ENCODE measurements at regions of chr6 and their contacts with region 1.

Region 1: GRCh38 chr6:13454286-13455221 is 32.8 kb downstream of the GFOD1 start:
- DNase-seq: peak; percentile 70
- ATAC-seq: peak; percentile 81
- H3K4me3 Mint-ChIP-seq: peak overlapping the region; percentile 63
- H3K27ac Mint-ChIP-seq: peak overlapping the region; percentile 96
- H3K4me1 Mint-ChIP-seq: peaks cover 61% of the 10 kb centered on the region
- H3K27me3 Mint-ChIP-seq: no peaks in the 10 kb centered on the region

Region 2: GRCh38 chr6:13441778-13442177 is 12.8 kb before region 1 on chr6:
- CTCF ChIA-PET with region 1: interaction called, 16 read pairs
- POLR2A ChIA-PET with region 1: interaction called, 3 read pairs
- DNase-seq: no peak
- ATAC-seq: no peak
- H3K4me3 Mint-ChIP-seq: no peak overlapping the region
- H3K27ac Mint-ChIP-seq: no peak overlapping the region
- H3K4me1 Mint-ChIP-seq: peaks cover 26% of the 10 kb centered on the region
- H3K27me3 Mint-ChIP-seq: no peaks in the 10 kb centered on the region

Region 3: GRCh38 chr6:13487122-13488014 is 32.8 kb after region 1 on chr6 and contains the start of gene GFOD1:
- CTCF ChIA-PET with region 1: interaction called, 22 read pairs
- POLR2A ChIA-PET with region 1: interaction called, 4 read pairs
- DNase-seq: peak; percentile 82
- ATAC-seq: peak; percentile 87
- H3K4me3 Mint-ChIP-seq: peak within 1 kb of the TSS; percentile 84
- H3K27ac Mint-ChIP-seq: peak within 1 kb of the TSS; percentile 80
- H3K4me1 Mint-ChIP-seq: peaks cover 49% of the 10 kb centered on the region
- H3K27me3 Mint-ChIP-seq: peaks cover 12% of the 10 kb centered on the region
- total RNA-seq, gene GFOD1: 8.0 to 8.7 TPM